OCI-LY7 (cell line): ENCODE measurements at regions of chr4 and their contacts with region 1.

Region 1: GRCh38 chr4:40629401-40630334 is at the start of gene RBM47:
- DNase-seq: peak; percentile 36
- H3K4me3 ChIP-seq: peak within 1 kb of the TSS; percentile 58
- H3K27ac ChIP-seq: no peak within 1 kb of the TSS
- H3K4me1 ChIP-seq: peaks cover 28% of the 10 kb centered on the region
- CTCF ChIP-seq: peak; percentile 43; the same call in 1 of the 2 replicates
- total RNA-seq, gene RBM47: 4.6 and 5.3 TPM in 2 replicates

Region 2: GRCh38 chr4:40409835-40410234 is 219.8 kb before region 1 on chr4:
- CTCF ChIA-PET with region 1: no interaction called
- POLR2A ChIA-PET with region 1: interaction called, 11 read pairs
- intact Hi-C with region 1: no loop called
- DNase-seq: no peak
- H3K4me3 ChIP-seq: no peak overlapping the region
- H3K27ac ChIP-seq: no peak overlapping the region
- H3K4me1 ChIP-seq: no peaks in the 10 kb centered on the region
- CTCF ChIP-seq: no peak

Region 3: GRCh38 chr4:40564004-40564403 is 65.7 kb before region 1 on chr4:
- CTCF ChIA-PET with region 1: no interaction called
- POLR2A ChIA-PET with region 1: interaction called, 10 read pairs
- intact Hi-C with region 1: loop called (anchors 5 kb)
- DNase-seq: no peak
- H3K4me3 ChIP-seq: no peak overlapping the region
- H3K27ac ChIP-seq: no peak overlapping the region
- H3K4me1 ChIP-seq: peaks cover 56% of the 10 kb centered on the region
- CTCF ChIP-seq: no peak

Region 4: GRCh38 chr4:40576631-40577480 is 52.8 kb before region 1 on chr4:
- CTCF ChIA-PET with region 1: no interaction called
- POLR2A ChIA-PET with region 1: interaction called, 10 read pairs
- intact Hi-C with region 1: no loop called
- DNase-seq: peak; percentile 56
- H3K4me3 ChIP-seq: no peak overlapping the region
- H3K27ac ChIP-seq: peak overlapping the region; percentile 25
- H3K4me1 ChIP-seq: peaks cover 47% of the 10 kb centered on the region
- CTCF ChIP-seq: no peak

Region 5: DNA sequence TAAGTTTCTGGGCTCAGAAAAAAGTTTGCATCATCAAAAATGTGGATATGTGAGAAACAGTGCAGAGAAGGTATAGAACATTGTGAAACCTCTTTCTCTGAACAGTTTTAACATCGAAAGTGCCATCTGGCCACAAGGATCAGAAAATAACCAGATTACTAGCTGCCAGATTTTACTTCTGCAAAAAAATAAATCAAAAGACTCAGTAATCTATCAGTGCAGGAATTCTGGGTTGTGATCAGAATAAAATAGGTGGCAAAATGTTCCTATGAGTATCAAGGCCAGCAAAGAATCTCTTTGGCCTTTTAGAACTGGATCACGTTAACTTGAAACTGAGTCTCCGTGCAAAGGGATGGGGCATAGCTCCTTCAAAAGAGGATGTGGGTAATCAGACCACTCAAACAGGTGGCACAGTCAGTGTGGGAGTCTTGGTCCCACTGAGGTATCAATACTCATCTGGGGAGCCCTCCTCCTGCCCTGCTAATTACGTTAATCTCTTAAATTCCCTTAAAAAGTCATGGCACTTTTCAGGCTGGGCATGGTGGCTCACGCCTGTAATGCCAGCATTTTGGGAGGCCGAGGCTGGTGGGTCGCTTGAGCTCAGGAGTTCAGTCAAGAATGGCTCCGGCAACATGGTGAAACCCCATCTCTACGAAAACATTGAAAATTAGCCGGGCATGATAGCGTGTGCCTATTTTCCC is 26.7 kb after region 1 on chr4:
- CTCF ChIA-PET with region 1: interaction called, 4 read pairs
- POLR2A ChIA-PET with region 1: interaction called, 4 read pairs
- intact Hi-C with region 1: loop called (anchors 1 kb)
- DNase-seq: peak; percentile 84
- H3K4me3 ChIP-seq: peak overlapping the region; percentile 31
- H3K27ac ChIP-seq: peak overlapping the region; percentile 75
- H3K4me1 ChIP-seq: peaks cover 33% of the 10 kb centered on the region
- CTCF ChIP-seq: no peak